Vagina (tissue), 2 donors: ENCODE measurements at regions of chr6 and their contacts with region 1.

Region 1: GRCh38 chr6:77786935-77787629 is 134.2 kb downstream of the MEI4 start:
- DNase-seq: no peak
- H3K4me3 ChIP-seq: no peak overlapping the region
- H3K27ac ChIP-seq: no peak overlapping the region
- H3K4me1 ChIP-seq: no peaks in the 10 kb centered on the region
- H3K27me3 ChIP-seq: no peaks in the 10 kb centered on the region
- CTCF ChIP-seq: no peak
- POLR2A ChIP-seq: no peak

Region 2: GRCh38 chr6:77620278-77620882 is 166.7 kb before region 1 on chr6:
- intact Hi-C with region 1: no loop called
- DNase-seq: no peak
- H3K4me3 ChIP-seq: no peak overlapping the region
- H3K27ac ChIP-seq: no peak overlapping the region
- H3K4me1 ChIP-seq: no peaks in the 10 kb centered on the region
- H3K27me3 ChIP-seq: no peaks in the 10 kb centered on the region
- CTCF ChIP-seq: no peak
- POLR2A ChIP-seq: no peak

Region 3: DNA sequence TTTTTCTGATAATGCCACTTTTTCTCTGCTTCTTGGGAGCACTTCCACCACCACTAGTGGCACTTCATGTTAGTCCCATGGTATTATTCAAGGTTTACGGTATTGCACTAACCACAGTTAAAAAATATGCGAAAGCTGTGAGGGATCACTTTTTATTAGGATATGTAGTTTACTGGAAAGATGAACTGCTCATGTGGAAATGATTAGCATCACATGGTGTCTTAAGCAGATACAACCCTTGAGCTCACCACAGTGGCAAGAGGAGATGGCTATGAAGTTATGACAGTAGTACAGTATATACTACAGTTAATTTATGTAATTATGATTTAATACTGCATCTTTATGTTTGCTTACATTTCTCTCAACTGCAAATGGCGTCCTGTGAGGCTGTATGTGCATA is 1581.9 kb after region 1 on chr6:
- intact Hi-C with region 1: loop called (anchors 5 kb)
- DNase-seq: no peak
- H3K4me3 ChIP-seq: no peak overlapping the region
- H3K27ac ChIP-seq: no peak overlapping the region
- H3K4me1 ChIP-seq: no peaks in the 10 kb centered on the region
- H3K27me3 ChIP-seq: no peaks in the 10 kb centered on the region
- CTCF ChIP-seq: no peak
- POLR2A ChIP-seq: no peak